CD4-positive, alpha-beta memory T cell (primary cell): ENCODE measurements at regions of chr11 and their contacts with region 1.

Region 1: GRCh38 chr11:66638177-66639065 is at the start of gene RBM4:
- DNase-seq: peak; percentile 95 to 99 (median 98)
- H3K4me3 ChIP-seq: peak within 1 kb of the TSS; percentile 63 to 96
- H3K4me3 Mint-ChIP-seq: peak within 1 kb of the TSS; percentile 97 to 99 (median 98)
- H3K27ac ChIP-seq: peak within 1 kb of the TSS; percentile 88
- H3K27ac Mint-ChIP-seq: peak within 1 kb of the TSS; percentile 94 to 99 (median 99)
- H3K4me1 ChIP-seq: peaks cover 49% of the 10 kb centered on the region
- H3K4me1 Mint-ChIP-seq: peaks cover 48 to 81% (median 59%) of the 10 kb centered on the region in 4 donors
- H3K27me3 ChIP-seq: no peaks in the 10 kb centered on the region
- H3K27me3 Mint-ChIP-seq: no peaks in the 10 kb centered on the region
- total RNA-seq, gene RBM4: 183 to 189 TPM

Region 2: GRCh38 chr11:66592457-66593302 is 45.7 kb before region 1 on chr11 and contains the starts of genes CCDC87 and CCS:
- CTCF ChIA-PET with region 1: interaction called, 19 read pairs
- POLR2A ChIA-PET with region 1: interaction called, 41 read pairs
- intact Hi-C with region 1: loop called (anchors 1 kb)
- DNase-seq: peak; percentile 95 to 98 (median 97)
- H3K4me3 ChIP-seq: peak within 1 kb of the TSS; percentile 71 to 98
- H3K4me3 Mint-ChIP-seq: peak within 1 kb of the TSS; percentile 98 to 100 (median 99)
- H3K27ac ChIP-seq: peak within 1 kb of the TSS; percentile 88
- H3K27ac Mint-ChIP-seq: peak within 1 kb of the TSS; percentile 96 to 100 (median 100)
- H3K4me1 ChIP-seq: peaks cover 35% of the 10 kb centered on the region
- H3K4me1 Mint-ChIP-seq: peaks cover 16 to 42% (median 27%) of the 10 kb centered on the region in 4 donors
- H3K27me3 ChIP-seq: no peaks in the 10 kb centered on the region
- H3K27me3 Mint-ChIP-seq: no peaks in the 10 kb centered on the region
- total RNA-seq, gene CCDC87: not detected
- total RNA-seq, gene CCS: 61.0 to 61.5 TPM

Region 3: GRCh38 chr11:66651016-66651415 is 12.6 kb after region 1 on chr11:
- CTCF ChIA-PET with region 1: interaction called, 7 read pairs
- POLR2A ChIA-PET with region 1: interaction called, 43 read pairs
- intact Hi-C with region 1: no loop called
- DNase-seq: no peak
- H3K4me3 ChIP-seq: no peak overlapping the region
- H3K4me3 Mint-ChIP-seq: no peak overlapping the region
- H3K27ac ChIP-seq: no peak overlapping the region
- H3K27ac Mint-ChIP-seq: peak overlapping the region in 2 of 7 donors; percentile 8 to 54
- H3K4me1 ChIP-seq: peaks cover 31% of the 10 kb centered on the region
- H3K4me1 Mint-ChIP-seq: peaks cover 36 to 65% (median 49%) of the 10 kb centered on the region in 4 donors
- H3K27me3 ChIP-seq: no peaks in the 10 kb centered on the region
- H3K27me3 Mint-ChIP-seq: no peaks in the 10 kb centered on the region